ENCODE measurements at regions of chr1 and their contacts with region 1.

Region 1: GRCh38 chr1:32714277-32714676 is 11.7 kb upstream of the SYNC start:
- DNase-seq: no peak
- ATAC-seq: no peak
- H3K4me3 ChIP-seq: no peak overlapping the region
- H3K27ac ChIP-seq: no peak overlapping the region
- H3K4me1 ChIP-seq: peaks cover 7 to 13% of the 10 kb centered on the region in 2 donors
- H3K27me3 ChIP-seq: no peaks in the 10 kb centered on the region
- CTCF ChIP-seq: no peak

Region 2: DNA sequence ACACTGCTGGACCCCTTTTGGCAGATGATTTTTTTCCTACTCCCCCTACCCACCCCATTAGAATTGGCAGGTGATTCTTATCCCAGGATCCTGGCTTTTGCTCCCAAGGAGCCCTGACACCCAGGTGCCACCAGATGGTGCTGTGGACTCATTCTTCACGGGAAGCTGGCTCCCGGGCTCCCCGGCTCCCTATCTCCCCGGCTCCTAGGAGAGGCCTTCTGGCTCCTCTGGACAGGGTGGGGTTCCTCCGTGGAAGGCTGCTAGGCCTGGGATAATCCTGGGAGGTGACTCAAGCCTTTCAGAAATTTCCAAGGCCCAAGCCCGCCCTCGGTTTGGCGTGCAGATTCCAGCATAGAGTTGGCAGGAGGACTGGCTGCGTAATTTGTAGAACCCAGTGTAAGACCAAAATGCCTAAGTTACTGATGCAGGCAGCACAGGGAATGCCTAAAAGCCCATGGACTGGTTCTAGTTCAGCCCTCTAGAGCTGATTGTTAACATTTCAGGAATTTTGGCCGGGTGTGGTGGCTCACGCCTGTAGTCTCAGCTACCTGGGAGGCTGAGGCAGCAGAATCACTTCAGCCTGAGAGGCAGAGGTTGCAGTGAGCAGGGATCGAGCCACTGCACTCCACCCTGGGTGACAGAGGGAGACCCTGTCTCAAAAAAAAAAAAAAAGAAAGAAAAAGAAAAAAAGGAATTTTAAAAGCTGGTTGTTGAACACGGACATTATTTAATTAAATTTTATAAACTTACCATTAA is 313.2 kb before region 1 on chr1:
- intact Hi-C with region 1: no loop called
- DNase-seq: peak; percentile 74 to 91 (median 84)
- ATAC-seq: peak; percentile 98
- H3K4me3 ChIP-seq: no peak overlapping the region
- H3K27ac ChIP-seq: peak overlapping the region in 1 of 2 donors; percentile 28
- H3K4me1 ChIP-seq: peaks cover 0 to 5% of the 10 kb centered on the region in 2 donors
- H3K27me3 ChIP-seq: no peaks in the 10 kb centered on the region
- CTCF ChIP-seq: peak; percentile 76 to 85

Region 3: DNA sequence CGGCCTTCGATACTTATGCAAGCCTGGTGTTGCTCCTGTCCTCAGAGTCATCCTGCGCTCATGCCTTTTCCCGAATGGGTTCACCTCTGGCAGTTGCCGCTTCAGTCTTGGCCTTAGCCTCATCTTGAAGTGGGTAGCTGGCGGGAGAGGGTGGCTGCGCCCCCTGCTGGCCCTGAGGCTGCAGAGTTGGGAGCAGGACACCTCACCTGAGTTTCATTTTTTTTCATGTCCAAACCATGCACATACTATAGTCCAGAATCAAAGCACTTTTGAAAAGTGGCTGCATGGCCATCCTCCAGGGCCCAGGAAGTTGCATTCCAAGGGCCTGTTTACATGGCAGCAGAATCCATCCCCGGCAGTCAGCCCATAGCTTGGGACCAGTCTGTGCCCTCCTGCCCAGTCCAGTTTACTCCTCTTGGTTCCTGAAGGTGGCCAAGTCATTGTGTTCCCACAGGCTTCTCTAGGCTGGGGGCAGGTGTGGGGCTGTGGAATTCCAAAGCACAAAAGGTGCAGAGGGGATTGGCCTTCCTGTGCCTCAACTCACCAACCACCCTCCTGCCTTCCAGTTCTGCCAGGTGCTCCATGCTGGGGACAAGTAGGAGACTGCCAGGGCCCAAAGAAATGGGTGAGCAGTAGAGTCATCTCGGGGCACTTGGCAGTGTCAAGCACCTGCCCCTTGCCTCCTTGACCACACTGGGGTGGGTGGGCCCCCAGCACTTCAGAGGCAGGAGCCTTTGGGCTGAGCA is 58.9 kb after region 1 on chr1:
- intact Hi-C with region 1: loop called in 1 of 2 experiments (anchors 5 kb)
- DNase-seq: peak in 3 of 4 donors; percentile 77 to 91 (median 81)
- ATAC-seq: peak; percentile 86
- H3K4me3 ChIP-seq: no peak overlapping the region
- H3K27ac ChIP-seq: no peak overlapping the region
- H3K4me1 ChIP-seq: peaks cover 9 to 20% of the 10 kb centered on the region in 2 donors
- H3K27me3 ChIP-seq: no peaks in the 10 kb centered on the region
- CTCF ChIP-seq: peak; percentile 81 to 86

Region 4: GRCh38 chr1:32870615-32871363 is 156.5 kb after region 1 on chr1 and contains the start of gene FNDC5:
- intact Hi-C with region 1: loop called in 1 of 2 experiments (anchors 5 kb)
- DNase-seq: peak in 1 of 4 donors; percentile 67
- ATAC-seq: peak; percentile 54
- H3K4me3 ChIP-seq: peak within 1 kb of the TSS in 1 of 2 donors; percentile 21
- H3K27ac ChIP-seq: no peak within 1 kb of the TSS
- H3K4me1 ChIP-seq: peaks cover 2 to 8% of the 10 kb centered on the region in 2 donors
- H3K27me3 ChIP-seq: peaks cover 0 to 56% of the 10 kb centered on the region in 2 donors
- CTCF ChIP-seq: no peak
- polyA plus RNA-seq, gene FNDC5: 7.7 to 13.3 (median 10.3) TPM